BJ (cell line): ENCODE measurements at regions of chr16 and their contacts with region 1.

Region 1: GRCh38 chr16:67514382-67514828 is 14.2 kb upstream of the RIPOR1 start:
- DNase-seq: peak; percentile 24
- H3K4me3 ChIP-seq: no peak overlapping the region
- H3K27me3 ChIP-seq: no peaks in the 10 kb centered on the region
- CTCF ChIP-seq: peak; percentile 72

Region 2: GRCh38 chr16:67421035-67421434 is 93.4 kb before region 1 on chr16:
- CTCF ChIA-PET with region 1: no interaction called
- POLR2A ChIA-PET with region 1: no interaction called
- DNase-seq: no peak
- H3K4me3 ChIP-seq: no peak overlapping the region
- H3K27me3 ChIP-seq: peaks cover 12% of the 10 kb centered on the region
- CTCF ChIP-seq: no peak

Region 3: DNA sequence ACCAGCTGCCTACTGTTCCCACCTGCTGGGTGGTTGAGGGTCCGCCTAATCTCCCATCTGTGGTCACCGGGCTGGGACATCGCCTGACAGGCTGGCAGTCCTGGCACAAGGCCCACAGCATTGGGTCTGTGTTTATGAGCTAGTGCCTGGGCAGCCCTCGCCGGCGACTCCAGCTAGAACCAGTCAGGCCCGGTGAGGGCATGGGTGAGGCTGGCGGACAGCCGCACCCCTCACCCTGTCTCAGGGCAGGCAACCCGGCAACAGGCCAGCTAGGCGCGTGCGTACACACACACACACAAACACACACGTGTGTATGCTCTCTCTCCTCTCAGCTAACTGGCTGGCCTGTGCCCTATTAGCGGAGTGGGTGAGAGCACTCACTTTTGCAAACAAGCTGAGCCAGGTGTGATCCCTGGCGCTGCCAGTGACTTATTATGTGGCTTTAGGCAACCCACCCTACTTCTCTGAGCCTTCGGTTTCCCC is 73.1 kb before region 1 on chr16:
- CTCF ChIA-PET with region 1: no interaction called
- POLR2A ChIA-PET with region 1: no interaction called
- DNase-seq: no peak
- H3K4me3 ChIP-seq: no peak overlapping the region
- H3K27me3 ChIP-seq: no peaks in the 10 kb centered on the region
- CTCF ChIP-seq: no peak

Region 4: DNA sequence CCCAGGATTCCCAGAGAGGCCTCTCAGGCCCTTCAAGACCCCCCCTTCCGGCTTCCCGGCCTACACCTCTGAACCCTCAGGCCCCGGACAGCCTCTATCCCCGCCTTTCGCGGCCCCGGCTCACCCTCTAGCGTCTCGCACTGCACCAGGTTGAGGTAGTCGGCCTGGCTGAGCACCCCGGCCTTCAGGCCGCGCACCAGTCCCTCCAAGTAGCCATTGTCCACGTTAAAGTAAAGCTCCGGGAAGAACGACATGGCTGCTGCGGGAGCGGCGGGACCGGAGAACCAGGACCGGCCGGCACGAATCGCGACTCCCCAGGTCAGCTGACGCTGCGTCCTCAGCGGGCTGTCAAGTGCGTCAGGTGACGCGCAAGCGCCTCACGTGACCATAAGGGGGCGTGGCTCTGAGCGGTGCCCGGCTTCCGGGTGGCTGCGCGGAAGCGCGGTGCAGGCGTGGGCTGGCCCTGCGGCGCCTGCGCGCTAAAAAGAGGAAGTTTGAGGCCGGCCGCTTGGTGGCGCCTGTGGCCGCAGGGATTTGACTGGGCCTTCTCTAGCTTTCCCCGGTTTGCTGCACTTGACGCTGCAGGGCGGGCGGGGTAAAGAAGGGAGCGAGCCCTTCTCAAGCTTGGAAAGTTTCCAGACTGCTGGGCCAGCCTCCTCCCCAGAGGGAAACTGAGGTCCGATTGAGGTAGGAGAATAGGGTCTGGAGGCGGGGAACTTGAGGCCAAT is 33.4 kb before region 1 on chr16 and contains the start of gene ATP6V0D1:
- CTCF ChIA-PET with region 1: interaction called, 63 read pairs
- POLR2A ChIA-PET with region 1: no interaction called
- DNase-seq: peak; percentile 89
- H3K4me3 ChIP-seq: peak within 1 kb of the TSS; percentile 86
- H3K27me3 ChIP-seq: no peaks in the 10 kb centered on the region
- CTCF ChIP-seq: peak; percentile 87
- polyA plus RNA-seq, gene ATP6V0D1: 111 and 155 TPM in 2 replicates

Region 5: GRCh38 chr16:67490335-67491096 is 23.9 kb before region 1 on chr16:
- CTCF ChIA-PET with region 1: interaction called, 80 read pairs
- POLR2A ChIA-PET with region 1: no interaction called
- DNase-seq: no peak
- H3K4me3 ChIP-seq: no peak overlapping the region
- H3K27me3 ChIP-seq: no peaks in the 10 kb centered on the region
- CTCF ChIP-seq: no peak

Region 6: DNA sequence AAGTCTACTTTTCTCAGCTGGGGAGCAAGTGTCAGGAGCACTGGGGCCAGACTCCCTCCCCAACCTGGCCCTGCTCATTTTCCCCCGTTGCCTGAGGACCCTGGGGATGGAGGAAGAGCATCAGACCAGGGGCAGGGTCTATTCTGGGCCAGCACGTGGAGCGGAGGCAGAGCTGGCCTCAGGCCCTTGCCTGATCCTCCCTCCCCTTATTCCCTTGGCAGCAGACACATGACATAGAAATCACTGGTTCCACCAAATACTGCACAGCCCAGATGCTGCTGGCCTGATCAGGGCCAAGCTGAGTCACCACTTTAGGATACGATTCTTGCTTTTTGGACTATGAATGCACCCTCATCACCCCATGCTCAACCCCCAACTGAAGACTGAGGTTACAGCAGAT is 15.3 kb before region 1 on chr16:
- CTCF ChIA-PET with region 1: interaction called, 80 read pairs
- POLR2A ChIA-PET with region 1: no interaction called
- DNase-seq: no peak
- H3K4me3 ChIP-seq: no peak overlapping the region
- H3K27me3 ChIP-seq: no peaks in the 10 kb centered on the region
- CTCF ChIP-seq: no peak

Region 7: DNA sequence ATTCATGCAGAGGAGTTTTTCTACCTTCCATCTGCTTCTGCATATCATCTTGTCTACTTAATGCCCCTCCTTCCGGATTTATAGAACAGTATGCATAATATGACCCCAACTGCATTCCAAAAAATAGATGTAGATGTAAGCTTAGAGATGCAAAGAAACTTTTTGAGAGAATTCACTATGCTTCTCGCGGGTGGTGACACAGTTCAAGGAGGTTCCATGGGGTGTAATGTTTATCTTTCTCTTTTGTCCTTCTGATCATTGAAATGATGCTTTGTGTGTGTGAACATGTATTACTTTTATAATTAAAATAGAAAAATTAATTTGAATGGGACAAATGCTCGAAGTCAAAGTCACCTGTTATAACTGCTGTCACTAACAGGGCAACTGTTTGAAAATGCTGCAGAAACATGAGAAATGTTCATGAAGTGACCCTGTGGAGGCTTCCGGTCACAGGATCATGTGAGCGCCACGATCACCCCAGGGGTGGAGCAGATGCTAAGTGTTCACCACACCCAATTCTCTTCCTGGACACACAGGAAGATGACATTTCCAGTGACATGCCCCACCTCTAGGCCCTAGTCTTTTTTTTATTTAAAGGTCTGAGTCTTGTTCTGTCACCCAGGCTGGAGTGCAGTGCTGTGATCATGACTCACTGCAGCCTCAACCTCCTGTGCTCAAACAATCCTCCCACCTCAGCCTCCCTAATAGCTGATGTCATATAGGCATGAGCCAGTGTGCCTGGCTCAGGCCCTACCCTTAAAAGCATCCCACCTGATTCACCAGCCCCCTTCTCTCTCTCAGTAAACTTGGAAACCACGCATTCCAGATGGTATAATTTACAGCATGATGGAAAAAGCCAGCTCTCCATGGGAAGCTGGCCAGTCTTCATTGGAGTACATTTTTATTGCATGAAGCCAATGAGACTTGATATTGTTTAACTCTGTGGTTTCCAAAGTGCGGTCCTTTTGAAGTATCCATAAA is 10.1 kb before region 1 on chr16:
- CTCF ChIA-PET with region 1: interaction called, 13 read pairs
- POLR2A ChIA-PET with region 1: no interaction called
- DNase-seq: no peak
- H3K4me3 ChIP-seq: no peak overlapping the region
- H3K27me3 ChIP-seq: no peaks in the 10 kb centered on the region
- CTCF ChIP-seq: no peak